GM18951 (cell line): ENCODE measurements at regions of chr13 and their contacts with region 1.

Region 1: GRCh38 chr13:39037880-39038568 is at the starts of genes NHLRC3 and PROSER1:
- POLR2A ChIP-seq: peak; percentile 75

Region 2: GRCh38 chr13:39370554-39370953 is 332.5 kb after region 1 on chr13:
- in situ Hi-C with region 1: no loop called
- POLR2A ChIP-seq: no peak

Region 3: GRCh38 chr13:40749327-40749726 is 1711.3 kb after region 1 on chr13:
- in situ Hi-C with region 1: loop called (anchors 25 kb)
- POLR2A ChIP-seq: no peak